CD8-positive, alpha-beta T cell (primary cell): ENCODE measurements at regions of chr13 and their contacts with region 1.

Region 1: GRCh38 chr13:30465585-30466357 is at the start of gene HMGB1:
- DNase-seq: peak; percentile 93 to 98 (median 96)
- ATAC-seq: peak; percentile 85
- H3K4me3 ChIP-seq: peak within 1 kb of the TSS; percentile 54 to 97
- H3K4me3 Mint-ChIP-seq: peak within 1 kb of the TSS; percentile 95
- H3K27ac ChIP-seq: peak within 1 kb of the TSS; percentile 60 to 97
- H3K27ac Mint-ChIP-seq: peak within 1 kb of the TSS; percentile 99
- H3K4me1 ChIP-seq: peaks cover 26% of the 10 kb centered on the region
- H3K4me1 Mint-ChIP-seq: peaks cover 27% of the 10 kb centered on the region
- H3K27me3 ChIP-seq: no peaks in the 10 kb centered on the region
- H3K27me3 Mint-ChIP-seq: no peaks in the 10 kb centered on the region
- CTCF ChIP-seq: no peak
- total RNA-seq, gene HMGB1: 445 to 453 TPM

Region 2: DNA sequence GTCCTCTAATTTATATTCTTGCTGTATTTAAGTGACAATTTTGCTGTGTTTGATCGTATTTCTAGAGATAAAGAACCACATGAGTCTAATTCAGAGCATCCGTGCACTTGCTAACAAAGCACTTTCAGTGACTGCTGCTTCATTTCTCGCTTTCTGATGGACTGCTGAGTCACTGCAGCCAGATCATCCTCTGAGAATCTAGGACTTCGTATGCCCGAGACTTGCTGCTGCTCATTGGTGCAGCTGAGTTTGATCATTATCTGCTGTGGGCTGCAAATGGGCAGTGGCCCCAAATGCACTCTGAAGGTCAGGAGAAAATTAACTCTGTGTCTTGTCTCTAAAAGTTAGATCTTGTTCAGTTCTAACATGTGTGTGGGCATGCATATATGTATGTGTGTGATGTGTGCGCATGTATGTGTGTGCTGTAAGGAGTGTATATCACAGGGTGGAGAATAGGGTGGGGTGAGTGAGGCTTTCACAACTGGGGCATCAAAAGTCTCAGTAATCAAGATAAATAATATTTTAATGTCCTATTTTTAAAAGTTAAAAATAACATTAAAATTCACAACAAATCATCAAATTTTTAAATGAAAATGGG is 1303.0 kb before region 1 on chr13:
- CTCF ChIA-PET with region 1: no interaction called
- POLR2A ChIA-PET with region 1: no interaction called
- intact Hi-C with region 1: no loop called
- DNase-seq: no peak
- ATAC-seq: no peak
- H3K4me3 ChIP-seq: no peak overlapping the region
- H3K4me3 Mint-ChIP-seq: no peak overlapping the region
- H3K27ac ChIP-seq: no peak overlapping the region
- H3K27ac Mint-ChIP-seq: no peak overlapping the region
- H3K4me1 ChIP-seq: no peaks in the 10 kb centered on the region
- H3K4me1 Mint-ChIP-seq: no peaks in the 10 kb centered on the region
- H3K27me3 ChIP-seq: no peaks in the 10 kb centered on the region
- H3K27me3 Mint-ChIP-seq: peaks cover under 1% of the 10 kb centered on the region
- CTCF ChIP-seq: no peak

Region 3: DNA sequence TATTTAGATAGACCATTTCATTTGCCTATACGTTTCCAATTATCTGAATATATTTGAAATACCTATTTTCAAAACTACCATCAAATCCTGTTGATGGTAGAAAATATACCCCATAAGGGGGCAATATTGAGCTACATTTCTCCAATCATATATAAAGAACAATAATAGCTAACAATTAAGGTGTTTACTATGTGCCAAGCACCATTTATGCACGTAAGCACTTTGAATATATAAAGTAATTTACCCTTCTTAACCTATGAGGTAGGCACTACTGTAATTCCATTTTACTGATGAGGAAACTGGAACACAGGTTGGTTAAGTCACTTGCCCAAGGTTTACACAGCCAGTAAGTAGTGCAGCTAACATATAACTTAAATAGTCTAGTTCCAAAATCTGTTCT is 694.5 kb before region 1 on chr13:
- CTCF ChIA-PET with region 1: no interaction called
- POLR2A ChIA-PET with region 1: no interaction called
- intact Hi-C with region 1: loop called in 1 of 2 experiments (anchors 10 kb)
- DNase-seq: peak in 2 of 9 experiments; percentile 55 to 68
- ATAC-seq: peak; percentile 65
- H3K4me3 ChIP-seq: no peak overlapping the region
- H3K4me3 Mint-ChIP-seq: no peak overlapping the region
- H3K27ac ChIP-seq: no peak overlapping the region
- H3K27ac Mint-ChIP-seq: no peak overlapping the region
- H3K4me1 ChIP-seq: no peaks in the 10 kb centered on the region
- H3K4me1 Mint-ChIP-seq: no peaks in the 10 kb centered on the region
- H3K27me3 ChIP-seq: no peaks in the 10 kb centered on the region
- H3K27me3 Mint-ChIP-seq: no peaks in the 10 kb centered on the region
- CTCF ChIP-seq: peak; percentile 77

Region 4: DNA sequence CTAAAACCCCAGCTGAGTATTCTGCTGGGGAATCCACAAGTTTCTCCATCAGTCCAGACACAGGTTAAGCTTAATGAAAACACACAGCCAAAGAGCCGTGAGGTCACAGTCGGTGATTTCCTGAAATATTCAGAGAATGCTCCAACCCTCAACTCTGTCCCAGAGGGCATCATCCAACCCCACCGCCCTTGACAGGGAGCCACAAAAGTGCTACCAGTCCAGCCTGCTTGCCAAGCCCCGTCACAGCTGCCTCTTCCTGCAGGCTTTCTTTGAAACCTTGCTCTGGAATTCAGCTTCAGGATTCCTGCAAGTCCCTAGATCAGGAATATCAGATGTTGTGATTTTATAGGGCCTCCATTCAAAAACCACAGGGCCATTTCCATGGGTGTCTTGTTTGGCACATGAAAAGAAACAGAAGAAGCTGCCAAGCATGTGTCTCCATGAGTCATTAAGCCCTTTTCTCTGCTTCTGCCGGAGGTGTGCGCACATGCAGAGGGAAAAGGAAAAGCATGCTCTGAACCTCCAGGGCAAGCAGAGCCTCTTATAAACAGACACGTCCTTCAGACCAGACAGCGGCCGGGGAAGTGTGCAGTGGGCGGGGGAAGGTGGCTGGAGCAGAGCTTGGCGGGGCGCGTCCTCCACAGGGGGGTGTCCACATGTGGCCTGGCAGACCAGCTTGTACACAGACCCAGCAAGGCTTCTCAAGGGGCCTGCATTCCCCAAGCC is 323.1 kb before region 1 on chr13:
- CTCF ChIA-PET with region 1: interaction called, 5 read pairs
- POLR2A ChIA-PET with region 1: interaction called, 7 read pairs
- intact Hi-C with region 1: loop called in 1 of 2 experiments (anchors 5 kb)
- DNase-seq: peak in 2 of 9 experiments; percentile 38 to 52
- ATAC-seq: peak; percentile 35
- H3K4me3 ChIP-seq: no peak overlapping the region
- H3K4me3 Mint-ChIP-seq: no peak overlapping the region
- H3K27ac ChIP-seq: peak overlapping the region in 1 of 2 experiments; percentile 35
- H3K27ac Mint-ChIP-seq: peak overlapping the region; percentile 64
- H3K4me1 ChIP-seq: peaks cover 38% of the 10 kb centered on the region
- H3K4me1 Mint-ChIP-seq: peaks cover 47% of the 10 kb centered on the region
- H3K27me3 ChIP-seq: no peaks in the 10 kb centered on the region
- H3K27me3 Mint-ChIP-seq: no peaks in the 10 kb centered on the region
- CTCF ChIP-seq: no peak

Region 5: GRCh38 chr13:30371649-30372265 is 94.0 kb before region 1 on chr13:
- CTCF ChIA-PET with region 1: interaction called, 14 read pairs
- POLR2A ChIA-PET with region 1: interaction called, 26 read pairs
- intact Hi-C with region 1: loop called in 1 of 2 experiments (anchors 1 kb)
- DNase-seq: peak; percentile 39 to 90 (median 75)
- ATAC-seq: peak; percentile 55
- H3K4me3 ChIP-seq: peak overlapping the region; percentile 2 to 9
- H3K4me3 Mint-ChIP-seq: peak overlapping the region; percentile 67
- H3K27ac ChIP-seq: peak overlapping the region; percentile 53 to 66
- H3K27ac Mint-ChIP-seq: peak overlapping the region; percentile 94
- H3K4me1 ChIP-seq: peaks cover 77% of the 10 kb centered on the region
- H3K4me1 Mint-ChIP-seq: peaks cover 82% of the 10 kb centered on the region
- H3K27me3 ChIP-seq: no peaks in the 10 kb centered on the region
- H3K27me3 Mint-ChIP-seq: no peaks in the 10 kb centered on the region
- CTCF ChIP-seq: no peak

Region 6: DNA sequence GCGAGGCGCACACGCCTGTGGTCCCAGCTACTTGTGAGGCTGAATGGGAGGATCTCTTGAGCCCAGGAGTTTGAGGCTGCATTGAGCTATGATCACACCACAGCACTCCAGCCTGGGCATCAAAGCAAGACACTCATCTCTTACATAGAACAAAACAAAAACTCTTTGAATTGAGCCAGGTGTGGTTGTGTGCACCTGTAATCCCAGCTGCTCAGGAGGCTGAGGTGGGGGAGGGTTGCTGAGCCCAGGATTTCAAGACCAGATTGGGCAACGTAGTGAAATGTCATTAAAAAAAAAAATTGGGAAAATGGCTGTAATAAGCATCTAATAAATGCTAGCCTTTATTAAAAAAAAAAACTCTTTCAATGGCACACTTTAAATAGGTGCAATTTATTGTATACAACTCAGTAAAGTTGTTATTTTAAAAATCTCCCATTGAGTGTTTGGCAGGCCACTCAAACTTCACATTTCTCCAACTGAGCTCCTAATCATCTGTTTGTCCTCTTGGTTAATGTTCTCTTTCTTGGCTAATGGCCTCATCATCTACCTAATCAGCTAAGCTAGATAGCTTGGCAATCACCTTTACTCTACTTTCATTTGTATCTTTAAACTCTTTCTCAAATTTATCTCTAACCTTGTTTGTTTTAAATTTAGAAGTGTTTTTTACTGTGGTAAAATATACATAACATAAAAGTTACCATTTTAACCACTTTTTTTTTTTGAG is 28.0 kb after region 1 on chr13:
- CTCF ChIA-PET with region 1: no interaction called
- POLR2A ChIA-PET with region 1: no interaction called
- intact Hi-C with region 1: no loop called
- DNase-seq: no peak
- ATAC-seq: no peak
- H3K4me3 ChIP-seq: no peak overlapping the region
- H3K4me3 Mint-ChIP-seq: no peak overlapping the region
- H3K27ac ChIP-seq: no peak overlapping the region
- H3K27ac Mint-ChIP-seq: no peak overlapping the region
- H3K4me1 ChIP-seq: no peaks in the 10 kb centered on the region
- H3K4me1 Mint-ChIP-seq: no peaks in the 10 kb centered on the region
- H3K27me3 ChIP-seq: no peaks in the 10 kb centered on the region
- H3K27me3 Mint-ChIP-seq: no peaks in the 10 kb centered on the region
- CTCF ChIP-seq: no peak

Region 7: GRCh38 chr13:30572859-30573275 is 107.1 kb after region 1 on chr13:
- CTCF ChIA-PET with region 1: no interaction called
- POLR2A ChIA-PET with region 1: no interaction called
- intact Hi-C with region 1: loop called (anchors 2 to 5 kb)
- DNase-seq: peak in 4 of 9 experiments; percentile 12 to 72 (median 40)
- ATAC-seq: peak; percentile 57
- H3K4me3 ChIP-seq: peak overlapping the region; percentile 23 to 51
- H3K4me3 Mint-ChIP-seq: peak overlapping the region; percentile 75
- H3K27ac ChIP-seq: peak overlapping the region; percentile 58 to 72
- H3K27ac Mint-ChIP-seq: peak overlapping the region; percentile 91
- H3K4me1 ChIP-seq: peaks cover 27% of the 10 kb centered on the region
- H3K4me1 Mint-ChIP-seq: peaks cover 32% of the 10 kb centered on the region
- H3K27me3 ChIP-seq: no peaks in the 10 kb centered on the region
- H3K27me3 Mint-ChIP-seq: no peaks in the 10 kb centered on the region
- CTCF ChIP-seq: peak; percentile 44

Region 8: GRCh38 chr13:30802953-30803478 is 337.2 kb after region 1 on chr13:
- CTCF ChIA-PET with region 1: no interaction called
- POLR2A ChIA-PET with region 1: no interaction called
- intact Hi-C with region 1: loop called in 1 of 2 experiments (anchors 2 kb)
- DNase-seq: peak; percentile 61 to 89 (median 80)
- ATAC-seq: peak; percentile 99
- H3K4me3 ChIP-seq: no peak overlapping the region
- H3K4me3 Mint-ChIP-seq: peak overlapping the region; percentile 49
- H3K27ac ChIP-seq: no peak overlapping the region
- H3K27ac Mint-ChIP-seq: no peak overlapping the region
- H3K4me1 ChIP-seq: no peaks in the 10 kb centered on the region
- H3K4me1 Mint-ChIP-seq: peaks cover 11% of the 10 kb centered on the region
- H3K27me3 ChIP-seq: no peaks in the 10 kb centered on the region
- H3K27me3 Mint-ChIP-seq: no peaks in the 10 kb centered on the region
- CTCF ChIP-seq: peak; percentile 95